ENCODE measurements at regions of chr5 and their contacts with region 1.

Region 1: GRCh38 chr5:78594610-78595457 is 53.7 kb downstream of the LHFPL2 start:
- DNase-seq: peak; percentile 70 to 99
- H3K4me3 ChIP-seq: no peak overlapping the region
- H3K27ac ChIP-seq: peak overlapping the region; percentile 95
- H3K4me1 ChIP-seq: peaks cover 92% of the 10 kb centered on the region
- H3K27me3 ChIP-seq: no peaks in the 10 kb centered on the region
- CTCF ChIP-seq: no peak

Region 2: GRCh38 chr5:76920491-76920890 is 1674.3 kb before region 1 on chr5:
- CTCF ChIA-PET with region 1: no interaction called
- POLR2A ChIA-PET with region 1: no interaction called
- intact Hi-C with region 1: no loop called
- DNase-seq: no peak
- H3K4me3 ChIP-seq: no peak overlapping the region
- H3K27ac ChIP-seq: no peak overlapping the region
- H3K4me1 ChIP-seq: no peaks in the 10 kb centered on the region
- H3K27me3 ChIP-seq: no peaks in the 10 kb centered on the region
- CTCF ChIP-seq: no peak

Region 3: GRCh38 chr5:78638423-78638822 is 43.6 kb after region 1 on chr5:
- CTCF ChIA-PET with region 1: no interaction called
- POLR2A ChIA-PET with region 1: no interaction called
- intact Hi-C with region 1: loop called (anchors 1 kb)
- DNase-seq: peak; percentile 88 to 94
- H3K4me3 ChIP-seq: no peak overlapping the region; the same call in 1 of the 2 replicates
- H3K27ac ChIP-seq: peak overlapping the region; percentile 75
- H3K4me1 ChIP-seq: peaks cover 48% of the 10 kb centered on the region
- H3K27me3 ChIP-seq: no peaks in the 10 kb centered on the region
- CTCF ChIP-seq: no peak